Activated naive CD4-positive, alpha-beta T cell treated with anti-CD3 and anti-CD28 coated beads for 36 hours (primary cell): ENCODE measurements at regions of chr3 and their contacts with region 1.

Region 1: GRCh38 chr3:72310419-72311380 is 525.8 kb upstream of the PROK2 start:
- DNase-seq: peak; percentile 60
- H3K4me3 Mint-ChIP-seq: peak overlapping the region; percentile 27
- H3K27ac Mint-ChIP-seq: peak overlapping the region; percentile 81
- H3K4me1 Mint-ChIP-seq: peaks cover 25% of the 10 kb centered on the region
- H3K27me3 Mint-ChIP-seq: no peaks in the 10 kb centered on the region

Region 2: GRCh38 chr3:72339116-72340030 is 28.7 kb after region 1 on chr3:
- CTCF ChIA-PET with region 1: no interaction called
- intact Hi-C with region 1: loop called (anchors 2 kb)
- DNase-seq: no peak
- H3K4me3 Mint-ChIP-seq: no peak overlapping the region
- H3K27ac Mint-ChIP-seq: no peak overlapping the region
- H3K4me1 Mint-ChIP-seq: peaks cover 36% of the 10 kb centered on the region
- H3K27me3 Mint-ChIP-seq: no peaks in the 10 kb centered on the region

Region 3: GRCh38 chr3:72375237-72376076 is 64.8 kb after region 1 on chr3:
- CTCF ChIA-PET with region 1: no interaction called
- intact Hi-C with region 1: no loop called
- DNase-seq: peak; percentile 70
- H3K4me3 Mint-ChIP-seq: peak overlapping the region; percentile 20
- H3K27ac Mint-ChIP-seq: peak overlapping the region; percentile 82
- H3K4me1 Mint-ChIP-seq: peaks cover 62% of the 10 kb centered on the region
- H3K27me3 Mint-ChIP-seq: no peaks in the 10 kb centered on the region